ENCODE measurements at regions of chr11 and their contacts with region 1.

Region 1: DNA sequence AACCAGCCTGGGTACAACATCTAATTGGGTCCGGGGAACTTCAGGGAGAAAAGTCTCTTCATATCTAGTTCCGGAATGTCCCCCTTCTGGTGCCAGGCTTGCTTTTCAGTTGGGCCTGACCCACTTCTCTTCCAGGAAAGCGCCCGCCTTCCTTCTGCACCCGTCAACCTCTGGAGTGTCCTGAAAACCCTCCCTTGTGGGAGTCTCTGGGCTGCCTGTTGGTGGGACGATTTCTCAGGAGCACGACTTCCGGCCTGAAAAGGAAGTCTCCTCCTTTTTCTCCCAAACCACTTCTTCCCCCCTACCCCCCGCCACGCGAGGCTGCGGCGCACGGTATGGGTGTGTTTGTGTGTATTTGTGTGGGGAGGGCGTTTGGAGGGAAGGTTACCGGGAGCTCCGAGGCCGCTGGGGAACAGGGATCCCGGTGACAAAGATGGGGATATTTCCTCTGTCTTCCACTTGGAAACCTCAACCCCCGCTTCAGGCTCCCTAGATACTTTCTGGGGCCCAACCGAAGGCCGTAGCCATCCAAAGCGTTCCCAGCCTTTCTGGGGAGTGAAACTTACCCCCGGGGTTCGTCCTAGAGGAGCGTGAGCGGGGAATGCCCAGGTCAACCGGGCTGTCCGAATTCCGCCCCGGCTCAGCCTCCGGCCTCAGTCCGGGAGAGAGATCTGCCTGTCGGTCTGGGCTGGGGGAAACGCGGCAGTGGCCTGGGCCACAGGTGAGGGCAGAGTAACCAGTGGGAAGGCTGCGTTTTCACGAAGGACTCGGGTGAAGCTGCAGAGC is at the start of gene NKAPD1:
- DNase-seq: peak; percentile 64 to 88 (median 84)
- ATAC-seq: peak; percentile 94
- H3K4me3 ChIP-seq: peak within 1 kb of the TSS; percentile 97
- H3K4me3 Mint-ChIP-seq: peak within 1 kb of the TSS; percentile 80 to 98 (median 94)
- H3K27ac ChIP-seq: peak within 1 kb of the TSS; percentile 79
- H3K27ac Mint-ChIP-seq: peak within 1 kb of the TSS; percentile 84 to 96 (median 95)
- H3K4me1 ChIP-seq: peaks cover 5 to 11% of the 10 kb centered on the region in 2 donors
- H3K4me1 Mint-ChIP-seq: peaks cover 14 to 49% (median 40%) of the 10 kb centered on the region in 7 donors
- H3K27me3 ChIP-seq: no peaks in the 10 kb centered on the region
- H3K27me3 Mint-ChIP-seq: peaks cover 6 to 22% (median 12%) of the 10 kb centered on the region in 5 donors
- total RNA-seq, gene NKAPD1: 12.4 to 22.9 (median 19.7) TPM

Region 2: GRCh38 chr11:112086422-112087191 is 12.4 kb after region 1 on chr11 and contains the starts of genes SDHD and TIMM8B:
- CTCF ChIA-PET with region 1: no interaction called
- POLR2A ChIA-PET with region 1: interaction called, 25 read pairs
- intact Hi-C with region 1: loop called (anchors 1 kb)
- DNase-seq: peak; percentile 90 to 98 (median 97)
- ATAC-seq: peak; percentile 94
- H3K4me3 ChIP-seq: peak within 1 kb of the TSS; percentile 99
- H3K4me3 Mint-ChIP-seq: peak within 1 kb of the TSS; percentile 90 to 100 (median 98)
- H3K27ac ChIP-seq: peak within 1 kb of the TSS; percentile 76
- H3K27ac Mint-ChIP-seq: peak within 1 kb of the TSS; percentile 92 to 99 (median 96)
- H3K4me1 ChIP-seq: peaks cover 21 to 23% of the 10 kb centered on the region in 2 donors
- H3K4me1 Mint-ChIP-seq: peaks cover 44 to 69% (median 62%) of the 10 kb centered on the region in 7 donors
- H3K27me3 ChIP-seq: no peaks in the 10 kb centered on the region
- H3K27me3 Mint-ChIP-seq: peaks cover 0 to 2% (median 0%) of the 10 kb centered on the region in 5 donors
- total RNA-seq, gene SDHD: 39.6 to 84.4 (median 65.8) TPM
- total RNA-seq, gene TIMM8B: 15.5 to 61.1 (median 24.3) TPM

Region 3: DNA sequence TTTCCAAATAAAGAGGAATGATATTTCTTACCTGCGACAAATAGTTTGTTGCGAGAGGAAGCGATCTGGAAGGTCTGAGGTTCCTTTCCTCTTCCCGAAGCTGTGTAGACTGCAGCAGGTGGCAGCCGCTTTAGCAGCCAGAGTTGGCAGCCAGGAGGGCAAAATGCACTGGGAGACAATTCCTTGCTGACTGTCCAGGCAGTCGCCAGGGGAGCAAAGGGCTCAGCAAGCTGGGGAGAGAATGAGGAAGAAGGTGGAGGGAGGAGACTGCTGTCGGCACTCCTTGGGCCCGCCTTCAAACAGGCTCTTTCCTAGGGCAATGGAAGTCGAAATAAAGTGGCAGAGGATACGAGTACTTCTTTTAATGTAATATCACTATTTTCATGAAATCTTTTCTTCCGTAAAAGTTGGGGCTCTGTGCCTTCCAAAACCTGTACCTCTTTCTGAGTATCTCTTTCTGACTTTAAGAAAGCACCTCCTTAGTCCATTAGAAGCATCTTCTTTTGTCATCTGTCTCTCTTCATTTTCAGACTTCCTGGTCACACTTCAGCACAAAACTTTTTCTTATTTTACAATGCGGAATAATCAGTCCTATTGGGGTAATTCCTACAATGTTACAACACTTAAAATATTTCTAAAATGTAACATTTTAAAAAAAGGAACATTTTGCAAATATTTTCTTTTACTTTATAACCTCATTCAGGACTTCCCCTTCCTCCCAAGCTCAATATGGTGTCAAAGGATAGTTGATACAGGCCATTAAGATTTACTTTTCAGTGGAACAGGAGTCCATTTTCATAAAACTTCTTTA is 89.9 kb after region 1 on chr11 and contains the start of gene IL18:
- CTCF ChIA-PET with region 1: no interaction called
- POLR2A ChIA-PET with region 1: no interaction called
- intact Hi-C with region 1: no loop called
- DNase-seq: no peak
- ATAC-seq: peak; percentile 72
- H3K4me3 ChIP-seq: no peak within 1 kb of the TSS
- H3K4me3 Mint-ChIP-seq: peak within 1 kb of the TSS in 7 of 10 donors; percentile 22 to 71 (median 44)
- H3K27ac ChIP-seq: no peak within 1 kb of the TSS
- H3K27ac Mint-ChIP-seq: peak within 1 kb of the TSS in 1 of 9 donors; percentile 75
- H3K4me1 ChIP-seq: no peaks in the 10 kb centered on the region
- H3K4me1 Mint-ChIP-seq: peaks cover 5 to 13% (median 6%) of the 10 kb centered on the region in 7 donors
- H3K27me3 ChIP-seq: no peaks in the 10 kb centered on the region
- H3K27me3 Mint-ChIP-seq: peaks cover 14 to 43% (median 31%) of the 10 kb centered on the region in 5 donors
- total RNA-seq, gene IL18: 0.32 to 8.3 (median 0.72) TPM in 4 of 5 experiments, not detected in the other